Spleen (tissue), 13 donors: ENCODE measurements at regions of chr1 and their contacts with region 1.

Region 1: DNA sequence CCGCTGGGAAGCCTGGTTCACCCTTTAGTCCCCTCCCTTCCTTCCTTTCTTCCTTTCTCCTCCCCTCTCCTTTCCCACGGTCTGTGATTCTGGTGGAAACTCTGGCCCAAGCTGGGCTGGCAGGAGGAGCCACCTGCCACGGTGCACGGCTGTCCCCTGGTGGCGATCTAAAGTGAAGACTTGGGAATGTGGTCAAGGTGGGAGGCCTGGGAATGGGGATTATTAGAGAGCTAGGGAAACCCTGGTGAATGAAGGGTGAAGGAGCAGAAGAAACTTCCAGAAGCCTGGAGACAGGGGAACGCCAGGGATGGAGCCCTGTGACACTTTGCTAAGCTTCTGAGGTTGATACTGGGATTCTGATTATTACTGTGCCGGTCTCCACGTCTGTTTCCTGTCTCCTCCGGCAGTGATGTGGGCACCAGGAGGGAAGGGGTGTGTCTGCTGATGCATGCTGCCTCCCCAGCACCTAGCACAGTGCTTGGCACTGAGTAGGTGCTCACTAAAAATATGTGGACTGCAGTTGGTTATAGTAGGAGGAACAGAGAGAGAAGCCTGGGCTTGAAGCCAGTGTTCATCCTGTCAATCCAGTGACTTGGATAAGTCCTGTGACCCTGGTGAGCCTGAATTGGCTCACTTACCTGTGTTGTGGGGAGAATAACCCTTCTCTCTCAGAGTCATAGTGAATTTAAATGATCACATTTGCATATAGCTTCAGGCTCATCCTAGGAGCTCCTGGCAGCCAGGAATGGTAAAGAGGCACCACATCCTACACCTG is 71.2 kb upstream of the NBPF3 start:
- DNase-seq: peak; percentile 92
- H3K4me3 ChIP-seq: no peak overlapping the region
- H3K27ac ChIP-seq: no peak overlapping the region
- H3K4me1 ChIP-seq: peaks cover 6 to 20% (median 9%) of the 10 kb centered on the region in 6 donors
- H3K27me3 ChIP-seq: no peaks in the 10 kb centered on the region
- CTCF ChIP-seq: peak; percentile 82 to 100 (median 86)
- POLR2A ChIP-seq: no peak

Region 2: GRCh38 chr1:21232044-21232443 is 136.7 kb before region 1 on chr1:
- intact Hi-C with region 1: loop called (anchors 1 kb)
- DNase-seq: no peak
- H3K4me3 ChIP-seq: no peak overlapping the region
- H3K27ac ChIP-seq: no peak overlapping the region
- H3K4me1 ChIP-seq: no peaks in the 10 kb centered on the region
- H3K27me3 ChIP-seq: no peaks in the 10 kb centered on the region
- CTCF ChIP-seq: peak; percentile 57 to 86 (median 79)
- POLR2A ChIP-seq: no peak

Region 3: GRCh38 chr1:21255278-21255942 is 113.3 kb before region 1 on chr1:
- intact Hi-C with region 1: loop called (anchors 2 kb)
- DNase-seq: peak; percentile 95
- H3K4me3 ChIP-seq: no peak overlapping the region
- H3K27ac ChIP-seq: peak overlapping the region in 4 of 8 donors; percentile 46 to 64 (median 60)
- H3K4me1 ChIP-seq: peaks cover 5 to 28% (median 20%) of the 10 kb centered on the region in 6 donors
- H3K27me3 ChIP-seq: no peaks in the 10 kb centered on the region
- CTCF ChIP-seq: peak; percentile 72 to 93 (median 87)
- POLR2A ChIP-seq: no peak

Region 4: DNA sequence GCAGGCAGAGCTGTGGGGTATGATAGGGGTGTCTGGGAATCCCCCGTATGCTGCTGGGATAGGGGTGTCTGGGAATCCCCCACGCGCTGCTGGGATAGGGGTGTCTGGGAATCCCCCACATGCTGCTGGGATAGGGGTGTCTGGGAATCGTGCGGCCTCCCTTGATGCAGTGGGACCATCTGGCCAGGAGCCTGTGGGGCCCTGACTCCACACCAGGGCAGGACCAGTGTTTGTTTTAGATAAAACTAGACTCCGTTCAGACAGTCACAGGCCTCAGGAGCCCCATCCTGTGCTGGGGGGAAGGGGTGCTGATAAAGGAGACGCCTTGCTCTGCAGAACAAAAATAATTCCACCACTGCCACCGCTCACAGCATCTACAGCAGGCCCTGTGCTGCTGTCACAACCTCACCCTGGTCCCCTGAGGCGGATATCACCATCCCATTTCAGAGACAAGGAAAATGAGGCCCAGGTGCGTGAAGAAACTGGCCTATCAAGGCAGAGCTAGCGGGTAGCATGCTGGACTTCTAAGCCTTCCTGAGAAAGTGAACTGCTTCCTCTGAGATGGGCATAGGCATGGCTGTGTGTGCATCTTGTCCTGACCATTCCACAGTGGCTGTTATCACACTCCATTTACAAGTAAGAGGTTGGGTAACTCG is 102.5 kb before region 1 on chr1:
- intact Hi-C with region 1: no loop called
- DNase-seq: no peak
- H3K4me3 ChIP-seq: no peak overlapping the region
- H3K27ac ChIP-seq: peak overlapping the region in 1 of 8 donors; percentile 31
- H3K4me1 ChIP-seq: peaks cover 23 to 88% (median 47%) of the 10 kb centered on the region in 6 donors
- H3K27me3 ChIP-seq: no peaks in the 10 kb centered on the region
- CTCF ChIP-seq: no peak
- POLR2A ChIP-seq: no peak

Region 5: GRCh38 chr1:21302747-21303715 is 65.7 kb before region 1 on chr1:
- intact Hi-C with region 1: no loop called
- DNase-seq: no peak
- H3K4me3 ChIP-seq: no peak overlapping the region
- H3K27ac ChIP-seq: peak overlapping the region in 3 of 8 donors; percentile 23 to 68 (median 57)
- H3K4me1 ChIP-seq: peaks cover 9 to 73% (median 50%) of the 10 kb centered on the region in 6 donors
- H3K27me3 ChIP-seq: no peaks in the 10 kb centered on the region
- CTCF ChIP-seq: no peak
- POLR2A ChIP-seq: no peak